ENCODE measurements at regions of chr16 and their contacts with region 1.

Region 1: GRCh38 chr16:71933913-71934695 is 38.8 kb downstream of the IST1 start:
- DNase-seq: peak; percentile 25
- H3K4me3 ChIP-seq: no peak overlapping the region
- H3K27ac ChIP-seq: no peak overlapping the region
- H3K4me1 ChIP-seq: peaks cover 1% of the 10 kb centered on the region
- H3K27me3 ChIP-seq: no peaks in the 10 kb centered on the region
- CTCF ChIP-seq: no peak

Region 2: DNA sequence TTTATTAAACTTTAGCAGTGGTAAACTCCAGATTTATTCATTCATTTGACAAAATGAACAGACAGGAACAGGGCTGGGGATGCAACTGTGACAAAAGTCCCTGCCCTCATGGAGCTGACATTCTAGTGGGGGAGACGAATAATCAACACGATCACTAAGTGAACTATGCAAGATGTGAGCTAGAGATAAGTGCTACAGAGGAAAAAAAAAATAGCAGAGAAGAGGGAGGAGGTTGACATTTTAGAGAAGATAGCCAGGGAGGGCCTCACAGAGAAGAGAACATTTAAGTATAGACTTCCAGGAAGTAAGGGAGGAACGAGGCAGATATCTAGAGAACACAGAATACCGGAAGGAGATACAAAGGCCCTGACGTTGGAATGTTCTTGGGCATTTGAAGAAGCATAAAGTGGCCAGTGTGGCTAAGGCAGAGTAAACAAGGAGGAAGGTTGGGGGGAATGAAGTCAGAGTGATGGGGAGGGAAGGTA is 107.5 kb before region 1 on chr16:
- CTCF ChIA-PET with region 1: no interaction called
- dilution Hi-C with region 1: loop called (anchors 5 kb)
- in situ Hi-C with region 1: no loop called
- intact Hi-C with region 1: no loop called
- DNase-seq: no peak
- H3K4me3 ChIP-seq: no peak overlapping the region
- H3K27ac ChIP-seq: no peak overlapping the region
- H3K4me1 ChIP-seq: no peaks in the 10 kb centered on the region
- H3K27me3 ChIP-seq: no peaks in the 10 kb centered on the region
- CTCF ChIP-seq: no peak

Region 3: GRCh38 chr16:71870818-71871217 is 63.3 kb before region 1 on chr16:
- CTCF ChIA-PET with region 1: no interaction called
- dilution Hi-C with region 1: loop called (anchors 5 kb)
- in situ Hi-C with region 1: no loop called
- intact Hi-C with region 1: no loop called
- DNase-seq: no peak
- H3K4me3 ChIP-seq: no peak overlapping the region
- H3K27ac ChIP-seq: no peak overlapping the region
- H3K4me1 ChIP-seq: no peaks in the 10 kb centered on the region
- H3K27me3 ChIP-seq: no peaks in the 10 kb centered on the region
- CTCF ChIP-seq: no peak

Region 4: GRCh38 chr16:71974068-71974818 is 40.1 kb after region 1 on chr16:
- CTCF ChIA-PET with region 1: no interaction called
- dilution Hi-C with region 1: loop called (anchors 5 kb)
- in situ Hi-C with region 1: no loop called
- intact Hi-C with region 1: no loop called
- DNase-seq: no peak
- H3K4me3 ChIP-seq: no peak overlapping the region
- H3K27ac ChIP-seq: no peak overlapping the region
- H3K4me1 ChIP-seq: no peaks in the 10 kb centered on the region
- H3K27me3 ChIP-seq: no peaks in the 10 kb centered on the region
- CTCF ChIP-seq: no peak